Common myeloid progenitor, CD34-positive (primary cell): ENCODE measurements at regions of chr19 and their contacts with region 1.

Region 1: GRCh38 chr19:1672038-1672768 is 19.8 kb upstream of the TCF3 start:
- DNase-seq: peak; percentile 61 to 73 (median 70)
- H3K4me3 ChIP-seq: peak overlapping the region in 6 of 7 experiments; percentile 7 to 48 (median 34)
- H3K27ac ChIP-seq: no peak overlapping the region
- H3K4me1 ChIP-seq: peaks cover 0 to 23% (median 20%) of the 10 kb centered on the region in 4 experiments
- H3K27me3 ChIP-seq: peaks cover 0 to 90% (median 28%) of the 10 kb centered on the region in 5 experiments

Region 2: GRCh38 chr19:1584500-1585242 is 87.5 kb before region 1 on chr19:
- CTCF ChIA-PET with region 1: no interaction called
- POLR2A ChIA-PET with region 1: no interaction called
- DNase-seq: no peak
- H3K4me3 ChIP-seq: no peak overlapping the region
- H3K27ac ChIP-seq: no peak overlapping the region
- H3K4me1 ChIP-seq: peaks cover 0 to 2% (median 0%) of the 10 kb centered on the region in 4 experiments
- H3K27me3 ChIP-seq: no peaks in the 10 kb centered on the region

Region 3: GRCh38 chr19:1605236-1606137 is 66.7 kb before region 1 on chr19 and contains the start of gene UQCR11:
- CTCF ChIA-PET with region 1: interaction called, 14 read pairs
- POLR2A ChIA-PET with region 1: no interaction called
- DNase-seq: peak; percentile 97 to 98 (median 98)
- H3K4me3 ChIP-seq: peak within 1 kb of the TSS; percentile 81 to 99 (median 94)
- H3K27ac ChIP-seq: peak within 1 kb of the TSS; percentile 58 to 81
- H3K4me1 ChIP-seq: peaks cover 0 to 56% (median 40%) of the 10 kb centered on the region in 4 experiments
- H3K27me3 ChIP-seq: no peaks in the 10 kb centered on the region

Region 4: GRCh38 chr19:1683869-1684572 is 11.8 kb after region 1 on chr19:
- CTCF ChIA-PET with region 1: interaction called, 13 read pairs
- POLR2A ChIA-PET with region 1: no interaction called
- DNase-seq: no peak
- H3K4me3 ChIP-seq: no peak overlapping the region
- H3K27ac ChIP-seq: no peak overlapping the region
- H3K4me1 ChIP-seq: no peaks in the 10 kb centered on the region
- H3K27me3 ChIP-seq: peaks cover 0 to 67% (median 9%) of the 10 kb centered on the region in 5 experiments

Region 5: GRCh38 chr19:1713170-1713569 is 41.0 kb after region 1 on chr19:
- CTCF ChIA-PET with region 1: no interaction called
- POLR2A ChIA-PET with region 1: no interaction called
- DNase-seq: no peak
- H3K4me3 ChIP-seq: no peak overlapping the region
- H3K27ac ChIP-seq: no peak overlapping the region
- H3K4me1 ChIP-seq: no peaks in the 10 kb centered on the region
- H3K27me3 ChIP-seq: peaks cover 0 to 48% (median 11%) of the 10 kb centered on the region in 5 experiments

Region 6: DNA sequence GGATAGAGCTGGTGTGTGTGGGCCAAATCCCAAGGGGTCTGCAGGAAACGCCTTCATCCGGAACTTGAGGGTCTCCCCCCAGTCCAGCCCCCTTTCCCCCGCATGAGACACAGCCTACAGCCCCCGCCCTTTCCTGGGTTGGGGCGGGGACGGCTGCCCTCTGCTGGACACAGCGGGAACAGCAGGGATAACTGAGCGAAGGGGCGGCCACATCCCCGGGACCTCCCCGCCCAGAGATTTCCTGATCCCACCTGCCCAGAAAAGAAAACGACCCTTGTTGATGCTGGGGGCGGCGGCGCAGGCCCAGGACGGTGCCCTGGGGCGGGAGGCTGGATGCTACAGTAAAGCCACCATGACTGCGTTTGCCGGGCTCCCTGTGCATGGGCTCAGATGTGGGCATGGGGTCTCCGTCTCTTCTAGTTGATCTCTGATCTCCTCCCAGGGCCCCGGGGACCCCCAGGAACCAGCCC is 95.3 kb after region 1 on chr19:
- CTCF ChIA-PET with region 1: interaction called, 32 read pairs
- POLR2A ChIA-PET with region 1: interaction called, 3 read pairs
- DNase-seq: peak in 1 of 3 donors; percentile 49
- H3K4me3 ChIP-seq: no peak overlapping the region
- H3K27ac ChIP-seq: no peak overlapping the region
- H3K4me1 ChIP-seq: peaks cover 0 to 8% (median 5%) of the 10 kb centered on the region in 4 experiments
- H3K27me3 ChIP-seq: peaks cover 0 to 99% (median 56%) of the 10 kb centered on the region in 5 experiments

Region 7: DNA sequence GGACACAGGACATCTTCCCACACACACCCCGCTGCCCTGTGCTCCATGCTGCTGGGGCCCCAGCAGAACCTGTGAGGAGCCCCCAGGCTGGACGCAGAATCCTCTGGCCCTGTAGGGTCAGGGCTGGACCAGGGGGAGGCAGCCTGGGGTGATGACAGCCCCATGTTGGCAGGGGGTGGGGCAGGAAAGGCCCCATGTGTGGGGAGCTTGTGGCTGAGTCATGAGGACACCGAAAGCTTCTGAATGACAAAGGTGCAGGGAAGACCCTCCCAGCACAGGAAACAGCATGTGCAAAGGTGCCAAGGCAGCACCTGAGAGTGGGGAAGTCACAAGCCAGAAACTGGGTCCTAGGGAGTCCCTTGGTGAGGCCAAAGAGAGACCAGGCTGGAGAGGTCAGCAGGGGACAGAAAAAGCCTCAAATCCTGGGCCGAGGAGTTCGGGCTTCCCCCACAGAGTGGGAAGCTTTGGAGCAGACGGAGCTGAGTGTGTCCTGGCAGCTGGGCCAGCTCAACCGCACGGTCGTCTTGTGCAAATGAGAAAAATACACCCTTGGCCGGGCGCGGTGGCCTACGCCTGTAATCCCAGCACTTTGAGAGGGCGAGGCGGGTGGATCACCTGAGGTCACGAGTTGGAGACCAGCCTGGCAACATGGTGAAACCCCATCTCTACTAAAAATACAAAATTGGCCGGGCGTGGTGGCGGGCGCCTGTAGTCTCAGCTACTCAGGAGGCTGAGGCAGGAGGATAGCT is 122.4 kb after region 1 on chr19:
- CTCF ChIA-PET with region 1: interaction called, 27 read pairs
- POLR2A ChIA-PET with region 1: no interaction called
- DNase-seq: no peak
- H3K4me3 ChIP-seq: no peak overlapping the region
- H3K27ac ChIP-seq: no peak overlapping the region
- H3K4me1 ChIP-seq: peaks cover 0 to 11% (median 8%) of the 10 kb centered on the region in 4 experiments
- H3K27me3 ChIP-seq: peaks cover 0 to 24% (median 2%) of the 10 kb centered on the region in 5 experiments

Region 8: GRCh38 chr19:1812469-1813196 is 140.4 kb after region 1 on chr19:
- CTCF ChIA-PET with region 1: interaction called, 10 read pairs
- POLR2A ChIA-PET with region 1: no interaction called
- DNase-seq: peak; percentile 94 to 97 (median 97)
- H3K4me3 ChIP-seq: peak overlapping the region; percentile 34 to 89 (median 69)
- H3K27ac ChIP-seq: peak overlapping the region in 1 of 2 experiments; percentile 58
- H3K4me1 ChIP-seq: peaks cover 0 to 25% (median 22%) of the 10 kb centered on the region in 4 experiments
- H3K27me3 ChIP-seq: no peaks in the 10 kb centered on the region